Esophagus muscularis mucosa (tissue), 4 donors: ENCODE measurements at regions of chr1 and their contacts with region 1.

Region 1: DNA sequence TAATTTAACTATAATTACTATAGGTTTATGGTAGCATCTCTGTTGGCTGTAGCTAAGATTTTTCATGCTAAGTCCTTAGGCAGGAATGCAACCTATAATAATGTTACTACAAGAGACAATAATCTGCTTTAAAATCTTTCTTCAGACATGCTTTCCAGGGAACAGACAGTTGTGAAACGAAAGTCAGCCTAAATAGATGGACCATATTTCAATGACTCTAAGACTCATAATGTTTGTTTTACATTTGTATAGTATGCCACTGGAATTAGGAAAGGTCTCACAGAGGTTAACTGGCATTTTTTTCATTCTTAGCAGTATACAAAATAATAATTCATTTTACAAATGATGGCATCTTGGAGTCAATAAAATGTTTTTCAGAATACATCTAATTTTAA is 8.1 kb downstream of the RERE start:
- DNase-seq: no peak
- H3K4me3 ChIP-seq: no peak overlapping the region
- H3K27ac ChIP-seq: no peak overlapping the region
- H3K4me1 ChIP-seq: peaks cover 14 to 67% (median 55%) of the 10 kb centered on the region in 4 donors
- H3K27me3 ChIP-seq: no peaks in the 10 kb centered on the region
- CTCF ChIP-seq: no peak
- EP300 ChIP-seq: no peak
- POLR2A ChIP-seq: no peak

Region 2: GRCh38 chr1:8754993-8755392 is 54.3 kb before region 1 on chr1:
- intact Hi-C with region 1: loop called (anchors 10 kb)
- DNase-seq: no peak
- H3K4me3 ChIP-seq: no peak overlapping the region
- H3K27ac ChIP-seq: peak overlapping the region in 2 of 4 donors; percentile 15 to 19
- H3K4me1 ChIP-seq: peaks cover 6 to 59% (median 39%) of the 10 kb centered on the region in 4 donors
- H3K27me3 ChIP-seq: no peaks in the 10 kb centered on the region
- CTCF ChIP-seq: no peak
- EP300 ChIP-seq: no peak
- POLR2A ChIP-seq: no peak

Region 3: GRCh38 chr1:8878448-8879347 is 69.4 kb after region 1 on chr1 and contains the start of gene ENO1:
- intact Hi-C with region 1: no loop called
- DNase-seq: peak; percentile 100
- H3K4me3 ChIP-seq: peak within 1 kb of the TSS; percentile 67 to 100 (median 80)
- H3K27ac ChIP-seq: peak within 1 kb of the TSS; percentile 92 to 99 (median 96)
- H3K4me1 ChIP-seq: peaks cover 48 to 61% (median 59%) of the 10 kb centered on the region in 4 donors
- H3K27me3 ChIP-seq: no peaks in the 10 kb centered on the region
- CTCF ChIP-seq: no peak
- EP300 ChIP-seq: no peak
- POLR2A ChIP-seq: peak; percentile 97
- total RNA-seq, gene ENO1: 595 to 895 (median 621) TPM

Region 4: DNA sequence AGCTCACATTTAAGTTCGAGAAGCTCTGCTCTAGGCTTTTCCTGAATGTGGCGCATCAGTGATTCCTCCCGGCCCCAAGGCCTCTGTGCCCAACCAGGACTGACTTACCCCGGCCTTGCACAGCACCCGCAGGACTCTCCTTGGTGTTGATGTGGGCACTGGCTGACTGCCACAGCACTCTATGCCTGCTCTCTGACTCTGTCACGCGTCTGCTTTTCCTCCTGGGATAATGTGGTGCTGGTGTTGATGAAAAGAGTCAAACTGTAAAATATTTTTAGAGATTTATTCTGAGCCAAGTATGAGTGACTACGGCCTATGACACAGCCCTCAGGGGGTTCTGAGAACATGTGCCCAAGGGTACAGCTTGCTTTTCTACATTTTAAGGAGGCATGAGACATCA is 275.6 kb after region 1 on chr1:
- intact Hi-C with region 1: no loop called
- DNase-seq: no peak
- H3K4me3 ChIP-seq: no peak overlapping the region
- H3K27ac ChIP-seq: peak overlapping the region; percentile 60 to 73 (median 67)
- H3K4me1 ChIP-seq: peaks cover 14 to 24% (median 23%) of the 10 kb centered on the region in 4 donors
- H3K27me3 ChIP-seq: no peaks in the 10 kb centered on the region
- CTCF ChIP-seq: no peak
- EP300 ChIP-seq: no peak
- POLR2A ChIP-seq: no peak